CD14-positive monocyte (primary cell): ENCODE measurements at regions of chr12 and their contacts with region 1.

Region 1: GRCh38 chr12:53213348-53213747 is 6.3 kb upstream of the ITGB7 start:
- DNase-seq: peak; percentile 73 to 82 (median 74)
- H3K4me3 ChIP-seq: no peak overlapping the region
- H3K4me3 Mint-ChIP-seq: no peak overlapping the region
- H3K27ac ChIP-seq: no peak overlapping the region
- H3K27ac Mint-ChIP-seq: peak overlapping the region in 1 of 7 donors; percentile 12
- H3K4me1 ChIP-seq: peaks cover 45 to 74% of the 10 kb centered on the region in 2 donors
- H3K4me1 Mint-ChIP-seq: peaks cover 81% of the 10 kb centered on the region
- H3K27me3 ChIP-seq: no peaks in the 10 kb centered on the region
- H3K27me3 Mint-ChIP-seq: peaks cover 0 to 5% (median 2%) of the 10 kb centered on the region in 3 donors
- CTCF ChIP-seq: peak; percentile 97

Region 2: DNA sequence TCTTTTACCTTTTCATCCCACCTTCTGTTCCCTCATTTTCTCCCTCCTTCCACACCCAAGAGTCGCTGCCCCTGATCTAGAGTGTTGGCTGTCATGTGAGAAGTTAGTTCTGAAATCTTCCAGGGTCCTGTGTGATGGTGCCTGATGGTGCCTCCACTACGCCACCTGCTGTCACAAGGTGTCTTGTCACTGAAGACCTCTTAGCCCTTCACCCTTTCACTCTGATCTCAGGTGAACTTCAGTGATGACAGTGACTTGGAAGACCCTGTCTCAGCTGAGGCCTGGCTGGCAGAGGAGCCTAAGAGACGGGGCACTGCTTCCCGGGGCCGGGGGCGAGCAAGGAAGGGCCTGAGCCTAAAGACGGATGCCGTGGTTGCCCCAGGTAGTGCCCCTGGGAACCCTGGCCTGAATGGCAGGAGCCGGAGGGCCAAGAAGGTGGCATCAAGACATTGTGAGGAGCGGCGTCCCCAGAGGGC is 74.4 kb after region 1 on chr12:
- intact Hi-C with region 1: loop called (anchors 2 to 5 kb)
- DNase-seq: peak; percentile 42 to 71 (median 55)
- H3K4me3 ChIP-seq: no peak overlapping the region
- H3K4me3 Mint-ChIP-seq: no peak overlapping the region
- H3K27ac ChIP-seq: no peak overlapping the region
- H3K27ac Mint-ChIP-seq: peak overlapping the region in 5 of 7 donors; percentile 41 to 91 (median 64)
- H3K4me1 ChIP-seq: no peaks in the 10 kb centered on the region
- H3K4me1 Mint-ChIP-seq: peaks cover 5% of the 10 kb centered on the region
- H3K27me3 ChIP-seq: no peaks in the 10 kb centered on the region
- H3K27me3 Mint-ChIP-seq: peaks cover 0 to 1% (median 0%) of the 10 kb centered on the region in 3 donors
- CTCF ChIP-seq: peak; percentile 73

Region 3: GRCh38 chr12:53500776-53501614 is 287.6 kb after region 1 on chr12 and contains the start of gene TARBP2:
- intact Hi-C with region 1: loop called in 1 of 2 experiments (anchors 10 kb)
- DNase-seq: peak; percentile 99
- H3K4me3 ChIP-seq: peak within 1 kb of the TSS; percentile 74 to 83 (median 81)
- H3K4me3 Mint-ChIP-seq: peak within 1 kb of the TSS; percentile 88 to 100
- H3K27ac ChIP-seq: peak within 1 kb of the TSS; percentile 99
- H3K27ac Mint-ChIP-seq: peak within 1 kb of the TSS; percentile 97 to 99 (median 99)
- H3K4me1 ChIP-seq: peaks cover 42 to 46% of the 10 kb centered on the region in 2 donors
- H3K4me1 Mint-ChIP-seq: peaks cover 47% of the 10 kb centered on the region
- H3K27me3 ChIP-seq: no peaks in the 10 kb centered on the region
- H3K27me3 Mint-ChIP-seq: peaks cover 0 to 6% (median 0%) of the 10 kb centered on the region in 3 donors
- CTCF ChIP-seq: no peak
- polyA plus RNA-seq, gene TARBP2: 16.6 to 39.4 (median 24.4) TPM